A549 (cell line): ENCODE measurements at regions of chr17 and their contacts with region 1.

Region 1: DNA sequence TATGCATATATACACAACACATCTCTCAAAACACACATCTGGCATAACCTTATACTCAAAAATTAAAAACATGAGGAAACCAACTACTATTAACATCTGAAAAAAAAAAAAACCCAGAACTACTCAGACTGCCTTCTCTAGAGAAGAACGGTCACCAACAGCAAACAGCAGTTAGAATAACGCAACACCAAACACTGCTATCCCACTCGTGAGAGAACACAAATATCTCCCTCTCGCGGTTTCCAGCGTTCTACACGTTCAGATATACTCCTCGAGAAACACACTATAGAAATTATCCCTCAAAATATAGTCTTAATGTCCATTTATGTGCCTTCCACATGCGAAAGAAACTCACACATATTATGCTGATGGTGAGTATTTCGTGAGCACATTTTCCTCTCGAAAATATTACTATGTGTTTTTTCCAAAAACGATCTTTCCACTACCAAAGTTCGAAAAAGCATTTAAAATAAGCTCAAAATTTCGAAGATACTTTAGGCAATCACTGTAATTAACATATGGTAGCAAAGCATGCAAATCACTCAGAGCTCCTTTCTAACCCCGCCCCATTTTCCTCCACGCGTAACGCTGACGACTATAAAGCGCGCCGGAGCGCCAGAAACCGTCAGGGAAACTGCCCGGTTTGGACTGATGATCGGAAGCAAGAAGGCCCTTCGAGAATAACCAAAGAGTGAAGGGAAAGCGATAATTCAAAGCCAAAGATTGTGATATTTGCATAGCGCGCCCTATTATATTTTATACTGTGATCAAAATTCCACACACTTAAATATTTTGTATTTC is 60.1 kb downstream of the TEX14 start:
- DNase-seq: peak; percentile 85 to 98
- ATAC-seq: peak; percentile 98 to 99
- H3K4me3 ChIP-seq: peak overlapping the region; percentile 40
- H3K27ac ChIP-seq: peak overlapping the region; percentile 83 to 89
- H3K4me1 ChIP-seq: peaks cover 9% of the 10 kb centered on the region
- CTCF ChIP-seq: peak; percentile 40; the same call in 2 of the 3 replicates
- EP300 ChIP-seq: no peak
- POLR2A ChIP-seq: peak; percentile 100
- RAD21 ChIP-seq: peak; percentile 40 to 50; a peak in 4 of 5 replicates

Region 2: GRCh38 chr17:58492238-58493121 is 139.2 kb before region 1 on chr17:
- CTCF ChIA-PET with region 1: no interaction called
- POLR2A ChIA-PET with region 1: no interaction called
- DNase-seq: no peak
- ATAC-seq: no peak
- H3K4me3 ChIP-seq: no peak overlapping the region
- H3K27ac ChIP-seq: no peak overlapping the region
- H3K4me1 ChIP-seq: no peaks in the 10 kb centered on the region
- CTCF ChIP-seq: no peak
- EP300 ChIP-seq: no peak
- POLR2A ChIP-seq: no peak
- RAD21 ChIP-seq: no peak

Region 3: DNA sequence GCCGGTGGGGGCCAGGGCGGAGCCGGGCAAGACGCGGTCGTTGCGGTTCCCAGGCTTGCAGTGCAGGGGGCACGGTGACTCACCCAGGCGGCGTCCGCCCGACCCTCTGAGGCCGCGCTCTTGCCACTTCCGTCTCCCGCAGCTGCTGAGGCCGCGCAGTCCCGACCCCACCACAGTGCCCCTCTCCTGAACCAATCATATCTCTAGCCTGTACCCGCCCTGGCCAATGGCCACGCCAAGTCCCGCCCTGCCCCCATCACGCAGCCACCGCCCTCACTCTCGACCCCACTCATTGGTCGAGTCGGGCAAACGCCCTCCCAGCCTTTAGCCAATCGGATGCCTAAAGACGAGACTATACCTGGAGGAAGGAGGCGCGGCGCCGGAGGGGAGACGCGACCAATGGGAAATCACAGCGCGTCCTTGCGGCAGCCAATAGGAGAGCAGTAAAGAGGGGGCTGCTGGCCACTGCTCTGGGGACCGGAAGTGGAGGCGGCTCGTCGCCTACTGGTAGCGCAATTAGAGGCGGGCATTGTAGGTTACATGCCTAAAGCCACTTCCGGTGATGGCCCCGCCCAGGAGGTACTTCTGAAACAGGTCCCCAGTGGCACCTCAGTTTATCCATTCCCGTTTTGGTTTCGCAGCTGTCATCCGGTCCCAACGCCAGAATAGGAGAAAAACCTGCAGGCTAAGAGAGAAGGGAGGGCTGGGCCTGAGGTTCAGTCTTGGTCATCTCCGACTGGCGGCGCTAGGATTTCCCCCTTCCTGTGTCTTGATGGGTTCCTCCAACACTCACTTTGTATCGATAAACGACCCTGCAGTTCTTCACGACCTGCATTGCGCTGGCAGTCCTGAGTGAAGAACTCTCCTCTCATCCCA is 113.8 kb before region 1 on chr17:
- CTCF ChIA-PET with region 1: interaction called, 45 read pairs
- POLR2A ChIA-PET with region 1: interaction called, 106 read pairs
- DNase-seq: peak; percentile 100
- ATAC-seq: peak; percentile 84 to 90
- H3K4me3 ChIP-seq: peak overlapping the region; percentile 72
- H3K27ac ChIP-seq: peak overlapping the region; percentile 76 to 87
- H3K4me1 ChIP-seq: peaks cover 15% of the 10 kb centered on the region
- CTCF ChIP-seq: no peak
- EP300 ChIP-seq: no peak
- POLR2A ChIP-seq: peak; percentile 48
- RAD21 ChIP-seq: no peak

Region 4: DNA sequence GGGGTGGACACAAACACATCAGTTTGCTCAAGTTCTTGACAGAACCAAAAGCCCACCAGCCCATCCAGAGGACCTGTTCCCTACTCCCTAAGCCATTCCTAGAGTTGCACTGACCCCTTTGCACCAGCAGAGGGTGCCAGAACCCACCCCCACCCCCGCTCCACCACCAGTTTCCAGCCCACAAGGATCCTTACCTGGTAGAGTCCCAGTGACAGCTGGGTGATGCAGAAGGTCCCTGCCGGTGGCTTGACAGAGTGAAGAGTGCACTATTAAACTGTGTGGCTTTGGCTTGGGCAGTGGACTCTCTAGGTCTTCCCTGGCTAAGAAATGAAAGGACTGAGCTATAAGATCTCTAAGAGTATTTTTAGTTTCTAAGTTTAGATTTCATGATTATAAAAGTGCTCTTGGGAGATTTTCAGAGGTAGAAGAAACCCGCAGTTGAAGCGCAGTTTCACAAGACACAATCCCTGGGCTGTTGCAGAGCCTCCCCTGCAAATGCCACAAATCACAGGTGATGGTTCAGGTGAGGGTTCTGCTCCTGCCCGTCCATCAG is 43.9 kb before region 1 on chr17:
- CTCF ChIA-PET with region 1: interaction called, 19 read pairs
- POLR2A ChIA-PET with region 1: interaction called, 26 read pairs
- DNase-seq: peak; percentile 69 to 81
- ATAC-seq: peak; percentile 91 to 96
- H3K4me3 ChIP-seq: no peak overlapping the region
- H3K27ac ChIP-seq: no peak overlapping the region
- H3K4me1 ChIP-seq: no peaks in the 10 kb centered on the region
- CTCF ChIP-seq: peak; percentile 93
- EP300 ChIP-seq: no peak
- POLR2A ChIP-seq: no peak
- RAD21 ChIP-seq: peak; percentile 89

Region 5: DNA sequence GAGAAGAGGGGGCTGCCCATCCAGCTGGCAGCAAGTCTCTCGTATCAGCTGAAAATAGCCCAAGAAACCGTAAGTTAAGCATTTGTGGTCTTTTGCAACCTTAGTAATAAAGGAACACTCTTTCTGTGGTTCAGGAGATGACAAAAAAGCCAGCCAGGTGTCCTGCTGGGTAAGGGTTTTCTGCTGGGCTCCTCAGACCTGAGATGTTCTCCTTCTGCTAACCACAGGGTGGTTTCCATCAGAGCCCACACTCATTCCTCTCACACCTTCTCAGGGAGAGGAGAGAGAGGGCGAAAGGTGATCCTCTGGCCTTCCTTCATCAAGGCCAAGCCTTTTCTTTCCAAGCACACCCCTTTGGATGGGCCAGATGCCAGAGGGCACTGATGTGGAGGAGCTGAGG is 10.5 kb before region 1 on chr17:
- CTCF ChIA-PET with region 1: interaction called, 4 read pairs
- POLR2A ChIA-PET with region 1: interaction called, 29 read pairs
- DNase-seq: no peak
- ATAC-seq: no peak; a peak in 1 of 6 replicates
- H3K4me3 ChIP-seq: no peak overlapping the region
- H3K27ac ChIP-seq: no peak overlapping the region
- H3K4me1 ChIP-seq: no peaks in the 10 kb centered on the region
- CTCF ChIP-seq: no peak
- EP300 ChIP-seq: no peak
- POLR2A ChIP-seq: no peak
- RAD21 ChIP-seq: no peak

Region 6: GRCh38 chr17:58666858-58667619 is 35.3 kb after region 1 on chr17:
- CTCF ChIA-PET with region 1: interaction called, 4 read pairs
- POLR2A ChIA-PET with region 1: interaction called, 160 read pairs
- DNase-seq: peak; percentile 72 to 94
- ATAC-seq: peak; percentile 91 to 93
- H3K4me3 ChIP-seq: peak overlapping the region; percentile 46
- H3K27ac ChIP-seq: peak overlapping the region; percentile 40 to 72
- H3K4me1 ChIP-seq: peaks cover 10% of the 10 kb centered on the region; the same call in 1 of the 3 replicates
- CTCF ChIP-seq: no peak
- EP300 ChIP-seq: no peak
- POLR2A ChIP-seq: no peak
- RAD21 ChIP-seq: no peak

Region 7: DNA sequence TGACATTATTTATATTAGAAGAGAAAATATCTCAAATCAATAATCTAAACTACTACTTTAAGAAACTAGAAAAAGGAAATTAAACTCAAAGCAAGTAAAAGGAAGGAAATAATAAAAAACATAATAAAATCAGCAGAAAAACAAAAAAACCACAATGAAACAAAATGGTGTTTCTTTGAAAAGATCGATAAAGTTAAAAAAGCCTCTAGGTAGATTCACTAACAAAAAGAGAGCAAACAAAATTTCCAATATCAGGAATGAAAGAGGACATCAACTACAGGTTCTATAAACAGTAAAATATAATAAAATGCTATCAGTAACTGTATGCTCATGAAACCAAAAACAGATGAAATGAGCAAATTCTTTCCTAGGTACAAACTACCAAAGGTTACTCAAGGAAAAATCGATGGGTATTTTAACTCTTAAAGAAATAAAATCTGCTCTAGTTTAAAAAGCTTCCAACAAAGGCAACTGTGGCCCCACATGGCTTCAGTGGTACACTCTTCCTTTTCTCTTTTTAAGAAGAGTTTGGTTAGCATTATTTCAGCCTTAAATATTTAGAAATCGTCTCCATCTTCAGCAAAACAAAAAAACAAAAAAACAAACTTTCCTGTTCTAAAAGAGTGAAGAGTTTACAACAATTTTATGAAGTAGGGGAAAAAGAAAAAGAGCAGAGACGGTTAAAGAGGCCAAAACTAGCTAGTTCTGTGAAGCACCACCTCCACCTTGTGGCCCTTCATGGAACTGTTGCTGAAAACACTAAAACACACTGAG is 372.8 kb after region 1 on chr17:
- CTCF ChIA-PET with region 1: interaction called, 11 read pairs
- POLR2A ChIA-PET with region 1: interaction called, 9 read pairs
- DNase-seq: peak; percentile 49 to 70
- ATAC-seq: peak; percentile 74 to 90; a peak in 4 of 6 replicates
- H3K4me3 ChIP-seq: no peak overlapping the region
- H3K27ac ChIP-seq: no peak overlapping the region
- H3K4me1 ChIP-seq: 0 out of 3 replicates have a peak, but pooled peaks cover 4% of the 10 kb centered on the region
- CTCF ChIP-seq: peak; percentile 99
- EP300 ChIP-seq: no peak
- POLR2A ChIP-seq: no peak
- RAD21 ChIP-seq: peak; percentile 95 to 98